Mammary epithelial cell (primary cell): ENCODE measurements at regions of chr11 and their contacts with region 1.

Region 1: GRCh38 chr11:119356349-119357031 is 10.0 kb upstream of the MFRP start:
- DNase-seq: no peak
- H3K4me3 ChIP-seq: peak overlapping the region; percentile 25 to 48 (median 32)
- H3K27ac ChIP-seq: no peak overlapping the region
- H3K4me1 ChIP-seq: peaks cover 29% of the 10 kb centered on the region
- H3K27me3 ChIP-seq: no peaks in the 10 kb centered on the region
- CTCF ChIP-seq: peak; percentile 58 to 92

Region 2: DNA sequence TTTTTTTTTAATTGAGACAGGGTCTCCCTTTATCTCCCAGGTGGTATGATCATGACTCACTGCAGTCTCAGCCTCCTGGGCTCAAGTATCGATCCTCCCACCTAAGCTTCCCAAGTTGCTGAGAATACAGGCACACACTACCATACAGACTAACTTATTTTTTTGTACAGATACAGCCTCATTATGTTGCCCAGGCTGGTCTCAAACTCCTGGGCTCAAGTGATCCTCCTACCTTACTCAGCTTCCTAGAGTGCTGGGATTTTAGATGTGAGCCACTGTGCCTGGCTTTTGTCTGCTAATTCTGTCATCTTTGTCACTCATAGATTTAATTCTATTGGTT is 106.8 kb before region 1 on chr11:
- CTCF ChIA-PET with region 1: no interaction called
- dilution Hi-C with region 1: loop called (anchors 5 kb)
- in situ Hi-C with region 1: no loop called
- intact Hi-C with region 1: no loop called
- DNase-seq: no peak
- H3K4me3 ChIP-seq: no peak overlapping the region
- H3K27ac ChIP-seq: no peak overlapping the region
- H3K4me1 ChIP-seq: no peaks in the 10 kb centered on the region
- H3K27me3 ChIP-seq: no peaks in the 10 kb centered on the region
- CTCF ChIP-seq: no peak

Region 3: GRCh38 chr11:119334174-119334930 is 22.1 kb before region 1 on chr11 and contains the start of gene RNF26:
- CTCF ChIA-PET with region 1: no interaction called
- dilution Hi-C with region 1: no loop called
- in situ Hi-C with region 1: no loop called
- intact Hi-C with region 1: loop called (anchors 2 kb)
- DNase-seq: peak; percentile 95
- H3K4me3 ChIP-seq: peak within 1 kb of the TSS; percentile 63 to 97 (median 93)
- H3K27ac ChIP-seq: peak within 1 kb of the TSS; percentile 88
- H3K4me1 ChIP-seq: peaks cover 22% of the 10 kb centered on the region
- H3K27me3 ChIP-seq: no peaks in the 10 kb centered on the region
- CTCF ChIP-seq: no peak
- total RNA-seq, gene RNF26: 3.7 to 34.4 TPM

Region 4: DNA sequence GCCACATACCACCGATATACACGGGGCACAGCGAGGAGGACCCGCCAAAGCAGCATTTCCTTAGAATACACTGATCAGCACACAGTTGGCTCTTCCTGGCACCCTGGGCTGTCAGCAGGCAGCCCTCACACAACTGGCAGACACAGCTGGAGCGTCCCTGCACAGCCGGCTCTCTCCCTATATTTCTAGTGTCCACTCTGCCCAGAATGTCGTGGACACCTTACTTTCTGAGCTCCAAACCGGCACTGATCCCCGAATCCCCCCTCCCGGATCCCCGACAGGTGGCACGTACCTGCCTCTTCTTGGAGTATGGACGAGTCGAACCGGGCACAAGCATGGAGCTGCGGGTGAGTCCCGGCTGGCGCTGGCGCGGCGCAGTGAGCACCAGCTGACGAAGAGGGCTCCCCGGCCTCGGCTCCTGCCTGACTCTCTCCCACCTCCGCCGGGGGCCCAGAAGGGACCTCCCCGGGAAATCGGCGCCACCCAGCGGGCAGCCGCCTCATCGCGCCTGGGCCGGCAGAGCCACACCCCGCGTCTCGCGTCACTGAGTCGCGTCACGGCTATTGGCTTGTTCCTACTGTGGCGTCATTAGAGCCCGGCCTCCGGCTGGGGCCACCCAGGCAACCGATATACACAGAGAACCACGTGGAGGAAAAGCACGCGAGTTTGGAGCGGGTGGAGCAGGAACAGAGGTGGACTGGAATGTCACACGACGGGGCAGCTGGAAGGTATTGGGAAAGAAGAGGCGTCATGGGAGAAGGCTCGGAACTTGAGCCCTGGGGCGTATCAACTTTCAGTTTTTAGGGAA is 24.9 kb after region 1 on chr11 and contains the start of gene USP2:
- CTCF ChIA-PET with region 1: interaction called, 5 read pairs
- dilution Hi-C with region 1: no loop called
- in situ Hi-C with region 1: no loop called
- intact Hi-C with region 1: loop called (anchors 1 kb)
- DNase-seq: peak; percentile 97
- H3K4me3 ChIP-seq: peak within 1 kb of the TSS; percentile 48 to 60 (median 55)
- H3K27ac ChIP-seq: peak within 1 kb of the TSS; percentile 90
- H3K4me1 ChIP-seq: peaks cover 38% of the 10 kb centered on the region
- H3K27me3 ChIP-seq: no peaks in the 10 kb centered on the region
- CTCF ChIP-seq: peak; percentile 62 to 89
- total RNA-seq, gene USP2: 2.7 to 3.0 TPM

Region 5: DNA sequence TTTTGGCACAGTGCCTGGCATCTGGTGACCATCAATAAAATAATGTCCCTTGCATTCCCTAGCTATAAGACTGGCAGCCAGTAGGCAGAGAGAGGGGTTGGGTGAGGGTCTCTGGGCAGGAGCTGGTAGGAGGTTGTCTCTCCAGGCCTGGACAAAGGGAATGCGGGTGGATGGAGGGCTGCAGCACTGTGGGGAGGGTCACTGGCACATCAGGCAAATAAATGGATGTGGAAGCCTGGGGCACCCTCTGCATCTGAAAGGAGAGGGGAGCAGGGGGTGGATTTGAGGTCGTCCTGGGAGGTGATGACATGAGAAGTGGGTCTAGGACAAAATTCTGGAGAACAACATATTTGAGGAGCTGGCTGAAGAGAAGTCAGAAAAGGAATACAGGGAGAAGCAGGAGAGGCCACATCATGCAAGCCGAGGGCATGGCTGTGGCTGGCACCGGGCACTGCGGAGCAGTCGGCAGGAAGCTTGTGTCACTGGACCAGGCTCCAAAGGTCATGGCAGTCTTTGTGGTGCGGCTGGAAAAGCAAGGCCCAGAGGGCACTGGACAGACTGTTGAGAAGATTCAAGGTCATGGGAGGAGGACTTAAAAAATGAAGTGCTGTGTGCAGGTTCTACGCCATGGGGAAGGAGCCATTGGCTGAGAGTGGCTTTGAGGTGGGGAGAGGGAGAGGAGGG is 102.9 kb after region 1 on chr11:
- CTCF ChIA-PET with region 1: no interaction called
- dilution Hi-C with region 1: loop called (anchors 5 kb)
- in situ Hi-C with region 1: no loop called
- intact Hi-C with region 1: no loop called
- DNase-seq: no peak
- H3K4me3 ChIP-seq: no peak overlapping the region
- H3K27ac ChIP-seq: no peak overlapping the region
- H3K4me1 ChIP-seq: peaks cover 10% of the 10 kb centered on the region
- H3K27me3 ChIP-seq: no peaks in the 10 kb centered on the region
- CTCF ChIP-seq: no peak

Region 6: GRCh38 chr11:120235024-120235861 is 878.8 kb after region 1 on chr11:
- CTCF ChIA-PET with region 1: no interaction called
- dilution Hi-C with region 1: no loop called
- in situ Hi-C with region 1: no loop called
- intact Hi-C with region 1: no loop called
- DNase-seq: peak; percentile 62
- H3K4me3 ChIP-seq: no peak overlapping the region
- H3K27ac ChIP-seq: no peak overlapping the region
- H3K4me1 ChIP-seq: peaks cover 19% of the 10 kb centered on the region
- H3K27me3 ChIP-seq: peaks cover 5% of the 10 kb centered on the region
- CTCF ChIP-seq: peak; percentile 88 to 97